Activated T-helper 1 cell treated with anti-CD3 and anti-CD28 coated beads, Interleukin-12 subunit alpha, Interleukin-12 subunit beta, Interleukin-2, Interleukin-4 antibody, amounts not matched to agents 30 ng/mL and 10 ng/mL and 1 ng/mL, durations not matched to agents 14 hours and 24 hours and 36 hours (primary cell): ENCODE measurements at regions of chr20 and their contacts with region 1.

Region 1: GRCh38 chr20:8019246-8019997 is at the start of gene TMX4:
- DNase-seq: peak; percentile 88
- H3K4me3 Mint-ChIP-seq: peak within 1 kb of the TSS; percentile 91
- H3K27ac Mint-ChIP-seq: peak within 1 kb of the TSS; percentile 89
- H3K4me1 Mint-ChIP-seq: peaks cover 39% of the 10 kb centered on the region
- H3K27me3 Mint-ChIP-seq: peaks cover 5% of the 10 kb centered on the region
- total RNA-seq, gene TMX4: 30.4 and 31.3 TPM in 2 replicates

Region 2: GRCh38 chr20:7980332-7981046 is 38.9 kb before region 1 on chr20:
- intact Hi-C with region 1: loop called (anchors 2 kb)
- DNase-seq: no peak
- H3K4me3 Mint-ChIP-seq: no peak overlapping the region
- H3K27ac Mint-ChIP-seq: peak overlapping the region; percentile 50
- H3K4me1 Mint-ChIP-seq: peaks cover 12% of the 10 kb centered on the region
- H3K27me3 Mint-ChIP-seq: no peaks in the 10 kb centered on the region

Region 3: DNA sequence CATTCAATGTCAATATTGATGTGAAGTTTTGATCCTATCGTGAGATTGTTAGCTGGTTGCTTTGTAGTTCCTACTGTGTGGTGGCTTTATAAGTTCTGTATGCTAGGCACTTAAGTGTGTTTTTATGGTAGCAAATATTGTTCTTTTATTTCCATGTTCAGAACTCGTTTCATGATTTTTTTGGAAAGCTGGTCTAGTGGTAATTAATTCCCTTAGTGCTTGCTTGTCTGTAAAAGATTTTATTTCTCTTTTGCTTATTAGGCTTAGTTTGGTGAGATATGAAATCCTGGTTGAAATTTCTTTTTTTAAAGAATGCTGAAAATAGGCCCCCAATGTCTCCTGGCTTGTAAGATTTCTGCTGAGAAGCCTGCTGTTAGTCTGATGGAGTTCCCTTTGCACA is 84.8 kb after region 1 on chr20:
- intact Hi-C with region 1: no loop called
- DNase-seq: no peak
- H3K4me3 Mint-ChIP-seq: no peak overlapping the region
- H3K27ac Mint-ChIP-seq: no peak overlapping the region
- H3K4me1 Mint-ChIP-seq: no peaks in the 10 kb centered on the region
- H3K27me3 Mint-ChIP-seq: peaks cover 2% of the 10 kb centered on the region

Region 4: GRCh38 chr20:8454137-8454712 is 434.8 kb after region 1 on chr20:
- intact Hi-C with region 1: loop called (anchors 1 kb)
- DNase-seq: no peak
- H3K4me3 Mint-ChIP-seq: no peak overlapping the region
- H3K27ac Mint-ChIP-seq: no peak overlapping the region
- H3K4me1 Mint-ChIP-seq: peaks cover 7% of the 10 kb centered on the region
- H3K27me3 Mint-ChIP-seq: no peaks in the 10 kb centered on the region

Region 5: DNA sequence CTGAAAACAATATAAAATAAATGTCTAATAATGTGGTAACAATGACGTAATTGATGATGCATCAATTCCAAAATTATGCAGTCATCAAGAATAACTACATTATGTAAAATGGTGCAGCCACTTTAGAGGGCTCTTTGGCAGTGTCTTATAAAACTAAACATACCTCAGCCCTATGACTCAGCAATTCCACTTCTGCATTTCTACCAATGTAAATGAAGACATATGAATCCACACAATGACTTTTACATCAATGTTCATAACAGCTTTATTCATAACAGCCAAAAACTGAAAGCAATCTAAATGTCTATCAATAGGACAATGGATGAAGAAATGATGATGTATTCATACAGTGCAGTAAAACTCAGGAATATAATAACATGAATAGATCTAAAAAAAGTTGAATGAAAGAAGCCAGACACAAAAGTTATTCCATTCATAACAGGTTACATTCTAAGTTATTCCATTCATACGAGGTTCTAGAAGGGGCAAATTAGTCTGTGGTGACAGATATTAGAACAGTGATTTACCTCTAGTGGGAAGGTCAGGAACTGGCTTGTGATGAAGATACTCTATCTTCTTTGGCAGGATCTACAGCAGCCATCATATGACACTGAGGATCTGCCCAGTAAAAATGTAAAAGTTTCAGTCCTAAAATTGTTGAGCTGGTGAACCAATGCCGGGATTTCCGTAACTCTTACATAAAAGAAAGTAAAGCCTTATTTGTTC is 508.7 kb after region 1 on chr20:
- intact Hi-C with region 1: loop called (anchors 10 kb)
- DNase-seq: no peak
- H3K4me3 Mint-ChIP-seq: no peak overlapping the region
- H3K27ac Mint-ChIP-seq: no peak overlapping the region
- H3K4me1 Mint-ChIP-seq: no peaks in the 10 kb centered on the region
- H3K27me3 Mint-ChIP-seq: no peaks in the 10 kb centered on the region

Region 6: DNA sequence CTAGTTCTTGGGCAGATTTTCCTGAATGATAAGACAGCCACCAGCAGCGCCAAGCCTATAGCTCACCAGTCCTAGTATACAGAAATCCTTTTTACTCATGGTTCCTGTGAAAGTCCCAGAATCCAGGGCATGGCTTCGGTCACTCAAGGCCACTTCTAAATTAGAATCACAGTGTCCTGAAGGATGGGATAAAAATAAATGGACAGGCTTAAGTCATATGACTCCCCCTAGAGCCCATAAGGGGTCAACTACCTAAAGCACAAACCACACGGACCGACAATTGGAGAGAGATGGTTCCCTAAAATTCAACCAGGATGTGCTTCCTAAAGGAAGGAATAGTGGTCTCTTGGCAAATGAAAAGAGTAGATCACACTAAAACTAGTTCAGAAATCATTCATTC is 645.4 kb after region 1 on chr20:
- intact Hi-C with region 1: loop called (anchors 5 kb)
- DNase-seq: no peak
- H3K4me3 Mint-ChIP-seq: no peak overlapping the region
- H3K27ac Mint-ChIP-seq: no peak overlapping the region
- H3K4me1 Mint-ChIP-seq: no peaks in the 10 kb centered on the region
- H3K27me3 Mint-ChIP-seq: no peaks in the 10 kb centered on the region